ENCODE measurements at regions of chr1 and their contacts with region 1.

Region 1: GRCh38 chr1:31548907-31549808 is 27.2 kb upstream of the TINAGL1 start:
- DNase-seq: peak; percentile 92 to 95 (median 93)
- ATAC-seq: peak; percentile 96
- H3K4me3 ChIP-seq: no peak overlapping the region
- H3K27ac ChIP-seq: peak overlapping the region; percentile 19 to 72 (median 46)
- H3K4me1 ChIP-seq: peaks cover 15% of the 10 kb centered on the region
- H3K27me3 ChIP-seq: no peaks in the 10 kb centered on the region
- CTCF ChIP-seq: peak; percentile 89 to 99 (median 98)
- POLR2A ChIP-seq: no peak

Region 2: DNA sequence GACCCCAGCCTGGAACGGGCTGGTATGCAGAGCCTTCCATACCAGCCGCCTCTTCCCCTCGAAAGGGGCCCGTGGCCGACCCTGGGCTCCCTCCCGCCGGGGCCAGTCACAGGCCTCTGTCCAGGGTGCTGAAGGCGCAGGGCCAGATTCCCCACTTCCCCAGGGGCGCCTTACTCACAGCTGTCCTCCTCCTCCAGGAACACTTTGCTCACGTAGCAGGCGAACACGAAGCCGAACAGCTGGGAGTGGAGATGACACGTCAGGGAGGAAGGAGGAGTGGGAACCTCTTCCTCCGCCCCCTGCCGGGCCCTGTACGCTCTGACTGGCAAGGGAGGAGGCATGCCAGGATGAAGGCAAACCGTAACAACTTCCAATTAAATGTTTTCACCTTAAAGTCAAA is 366.8 kb before region 1 on chr1:
- intact Hi-C with region 1: loop called (anchors 10 kb)
- DNase-seq: peak; percentile 68 to 80 (median 72)
- ATAC-seq: peak; percentile 69
- H3K4me3 ChIP-seq: no peak overlapping the region
- H3K27ac ChIP-seq: no peak overlapping the region
- H3K4me1 ChIP-seq: peaks cover 14% of the 10 kb centered on the region
- H3K27me3 ChIP-seq: peaks cover 0 to 3% of the 10 kb centered on the region in 2 donors
- CTCF ChIP-seq: peak in 4 of 7 experiments; percentile 16 to 20 (median 18)
- POLR2A ChIP-seq: no peak

Region 3: GRCh38 chr1:31394628-31395193 is 154.4 kb before region 1 on chr1:
- intact Hi-C with region 1: loop called (anchors 5 kb)
- DNase-seq: peak; percentile 88 to 92 (median 90)
- ATAC-seq: peak; percentile 96
- H3K4me3 ChIP-seq: no peak overlapping the region
- H3K27ac ChIP-seq: no peak overlapping the region
- H3K4me1 ChIP-seq: peaks cover 9% of the 10 kb centered on the region
- H3K27me3 ChIP-seq: no peaks in the 10 kb centered on the region
- CTCF ChIP-seq: peak; percentile 86 to 91 (median 90)
- POLR2A ChIP-seq: no peak

Region 4: DNA sequence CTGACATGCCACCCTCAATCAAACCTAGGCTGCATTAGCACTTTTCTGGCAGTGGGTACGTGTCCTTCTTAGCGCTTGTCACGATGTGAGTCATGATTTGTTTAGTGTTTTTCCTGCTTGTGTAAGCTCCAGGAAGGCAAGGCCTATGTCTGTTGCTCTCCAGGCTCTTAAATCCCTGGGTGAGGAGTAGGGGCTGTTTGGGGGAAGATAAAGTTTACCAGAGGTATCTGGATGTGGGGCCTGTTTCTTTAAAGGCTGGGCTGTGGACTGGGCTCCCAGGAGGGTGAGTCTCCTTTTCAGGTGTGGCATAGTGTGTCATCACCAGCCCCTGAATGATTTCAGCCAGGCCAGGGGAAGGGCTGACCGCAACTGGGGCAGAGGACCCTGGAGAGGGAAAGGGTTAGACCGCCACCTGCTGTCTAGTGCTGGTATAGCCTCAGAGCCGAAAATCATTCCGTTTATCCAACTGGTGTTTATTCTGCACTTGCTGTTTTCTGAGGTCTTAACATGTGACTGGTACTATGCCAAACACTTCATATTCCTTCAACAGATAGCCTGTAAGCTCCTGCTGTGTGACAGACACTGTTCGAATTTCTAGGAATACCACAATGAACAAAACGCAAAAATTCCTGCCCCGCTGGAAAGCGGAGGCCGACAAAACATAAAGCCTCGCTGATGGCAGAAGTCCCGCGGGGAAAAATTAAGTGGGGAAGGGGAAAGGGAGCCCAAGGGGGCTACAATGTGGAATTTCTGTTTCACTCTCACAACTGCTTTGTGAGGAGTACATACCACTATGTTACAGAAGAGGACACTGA is 126.4 kb before region 1 on chr1:
- intact Hi-C with region 1: loop called (anchors 10 kb)
- DNase-seq: peak; percentile 69 to 77 (median 76)
- ATAC-seq: peak; percentile 79
- H3K4me3 ChIP-seq: no peak overlapping the region
- H3K27ac ChIP-seq: peak overlapping the region in 1 of 4 donors; percentile 21
- H3K4me1 ChIP-seq: peaks cover 4% of the 10 kb centered on the region
- H3K27me3 ChIP-seq: no peaks in the 10 kb centered on the region
- CTCF ChIP-seq: peak; percentile 89 to 97 (median 92)
- POLR2A ChIP-seq: no peak

Region 5: DNA sequence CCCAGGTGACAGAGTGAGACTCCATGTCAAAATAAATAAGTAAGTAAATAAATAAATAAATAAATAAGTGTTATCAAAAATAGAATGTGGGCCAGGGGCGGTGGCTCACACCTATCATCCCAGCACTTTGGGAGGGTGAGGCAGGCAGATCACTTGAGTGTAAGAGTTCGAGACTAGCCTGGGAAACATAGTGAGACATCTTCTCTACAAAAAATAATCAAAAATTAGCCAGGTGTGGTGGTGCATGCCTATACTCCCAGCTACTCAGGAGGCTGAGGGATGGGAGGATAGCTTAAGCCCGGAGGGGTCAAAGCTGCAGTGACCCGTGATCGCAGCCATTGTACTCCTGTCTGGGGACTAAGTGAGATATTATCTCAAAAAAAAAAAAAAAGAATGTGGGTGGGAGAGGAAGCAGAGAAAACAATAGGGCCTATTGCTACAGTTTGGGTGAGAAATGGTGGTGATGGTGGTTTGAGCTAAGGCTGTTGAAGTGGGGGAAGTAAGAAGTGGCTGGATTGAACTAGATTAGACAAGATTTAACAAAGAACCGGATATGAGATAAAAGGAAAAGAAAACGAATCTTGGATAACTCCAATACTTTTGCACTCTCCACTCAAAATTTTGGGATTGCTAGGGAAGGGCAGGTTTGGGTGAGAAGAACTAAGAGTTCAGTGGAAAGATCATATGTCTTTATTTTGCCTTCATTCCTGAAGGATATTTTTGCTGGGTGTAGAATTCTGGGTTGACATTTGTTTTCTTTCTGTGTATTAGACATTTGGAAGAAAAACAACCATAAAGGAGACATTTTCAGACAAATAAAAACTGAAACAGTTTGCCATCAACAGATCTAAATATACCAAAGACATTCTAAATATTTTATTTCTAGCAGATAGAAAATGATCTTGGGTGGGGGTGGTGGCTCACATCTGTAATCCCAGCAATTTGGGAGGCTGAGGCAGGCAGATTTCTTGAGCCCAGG is 323.8 kb after region 1 on chr1:
- intact Hi-C with region 1: no loop called
- DNase-seq: no peak
- ATAC-seq: no peak
- H3K4me3 ChIP-seq: no peak overlapping the region
- H3K27ac ChIP-seq: no peak overlapping the region
- H3K4me1 ChIP-seq: peaks cover 18% of the 10 kb centered on the region
- H3K27me3 ChIP-seq: no peaks in the 10 kb centered on the region
- CTCF ChIP-seq: no peak
- POLR2A ChIP-seq: no peak